HAP-1 (cell line): ENCODE measurements at regions of chr6 and their contacts with region 1.

Region 1: GRCh38 chr6:28838634-28839442 is 84.9 kb downstream of the TRIM27 start:
- DNase-seq: peak; percentile 87 to 95
- H3K4me3 ChIP-seq: peak overlapping the region; percentile 72
- H3K4me1 ChIP-seq: peaks cover 2% of the 10 kb centered on the region; the same call in 1 of the 2 replicates
- H3K27me3 ChIP-seq: no peaks in the 10 kb centered on the region

Region 2: GRCh38 chr6:29016559-29017427 is 178.0 kb after region 1 on chr6:
- in situ Hi-C with region 1: loop called (anchors 10 kb)
- DNase-seq: peak; percentile 66 to 88
- H3K4me3 ChIP-seq: peak overlapping the region; percentile 35
- H3K4me1 ChIP-seq: no peaks in the 10 kb centered on the region; the same call in 1 of the 2 replicates
- H3K27me3 ChIP-seq: no peaks in the 10 kb centered on the region

Region 3: DNA sequence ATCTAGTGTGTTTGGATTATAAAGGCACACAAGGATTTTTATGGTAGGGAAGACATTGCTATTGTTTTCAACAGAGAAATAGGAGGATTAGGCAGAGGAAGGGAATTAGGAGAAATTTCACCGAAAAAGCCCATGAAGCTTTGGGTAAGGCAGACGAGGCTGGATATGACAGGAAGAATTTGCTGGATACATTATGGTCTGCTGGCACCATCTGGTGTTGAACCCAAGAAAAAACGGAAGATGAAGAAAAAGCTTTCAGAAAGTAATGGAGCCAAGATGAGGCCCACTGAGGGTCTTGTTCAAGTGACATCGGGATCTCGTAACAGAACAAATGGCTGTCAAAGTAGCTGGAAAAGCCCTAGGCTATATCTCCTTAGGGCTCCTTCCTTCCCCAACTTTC is 388.4 kb after region 1 on chr6:
- in situ Hi-C with region 1: loop called (anchors 25 kb)
- DNase-seq: no peak
- H3K4me3 ChIP-seq: no peak overlapping the region
- H3K4me1 ChIP-seq: no peaks in the 10 kb centered on the region
- H3K27me3 ChIP-seq: peaks cover 10% of the 10 kb centered on the region; the same call in 1 of the 2 replicates

Region 4: GRCh38 chr6:30463651-30464618 is 1625.1 kb after region 1 on chr6:
- in situ Hi-C with region 1: no loop called
- DNase-seq: no peak
- H3K4me3 ChIP-seq: no peak overlapping the region
- H3K4me1 ChIP-seq: no peaks in the 10 kb centered on the region
- H3K27me3 ChIP-seq: peaks cover 30% of the 10 kb centered on the region